ENCODE measurements at regions of chr6 and their contacts with region 1.

Region 1: GRCh38 chr6:151475653-151476523 is 17.9 kb upstream of the CCDC170 start:
- DNase-seq: no peak
- H3K4me3 ChIP-seq: no peak overlapping the region
- H3K27ac ChIP-seq: no peak overlapping the region
- H3K4me1 ChIP-seq: peaks cover 0 to 7% (median 2%) of the 10 kb centered on the region in 4 donors
- H3K27me3 ChIP-seq: no peaks in the 10 kb centered on the region
- CTCF ChIP-seq: peak in 3 of 4 experiments; percentile 16 to 74 (median 56)
- EP300 ChIP-seq: no peak
- POLR2A ChIP-seq: no peak

Region 2: DNA sequence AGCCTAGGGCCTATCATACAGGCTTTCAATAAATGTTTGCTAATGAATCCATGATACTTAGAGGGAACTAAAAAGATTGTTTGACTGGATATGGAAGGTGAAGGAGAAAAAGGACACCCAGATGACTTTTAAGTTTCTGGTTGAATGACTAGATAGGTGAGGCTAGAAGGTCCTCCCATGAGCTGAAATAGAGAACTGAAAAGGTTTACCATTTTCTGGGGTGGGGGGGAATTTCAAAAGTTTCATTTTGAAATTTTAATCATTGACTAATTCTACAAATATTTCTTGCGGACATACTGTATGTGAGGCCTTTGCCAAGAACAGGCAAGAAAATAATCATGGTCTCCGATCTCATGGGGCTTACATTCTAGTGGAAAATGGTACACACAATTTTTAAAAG is 66.6 kb before region 1 on chr6:
- intact Hi-C with region 1: loop called (anchors 10 kb)
- DNase-seq: no peak
- H3K4me3 ChIP-seq: no peak overlapping the region
- H3K27ac ChIP-seq: no peak overlapping the region
- H3K4me1 ChIP-seq: peaks cover 0 to 5% (median 0%) of the 10 kb centered on the region in 4 donors
- H3K27me3 ChIP-seq: no peaks in the 10 kb centered on the region
- CTCF ChIP-seq: no peak
- EP300 ChIP-seq: no peak
- POLR2A ChIP-seq: no peak

Region 3: DNA sequence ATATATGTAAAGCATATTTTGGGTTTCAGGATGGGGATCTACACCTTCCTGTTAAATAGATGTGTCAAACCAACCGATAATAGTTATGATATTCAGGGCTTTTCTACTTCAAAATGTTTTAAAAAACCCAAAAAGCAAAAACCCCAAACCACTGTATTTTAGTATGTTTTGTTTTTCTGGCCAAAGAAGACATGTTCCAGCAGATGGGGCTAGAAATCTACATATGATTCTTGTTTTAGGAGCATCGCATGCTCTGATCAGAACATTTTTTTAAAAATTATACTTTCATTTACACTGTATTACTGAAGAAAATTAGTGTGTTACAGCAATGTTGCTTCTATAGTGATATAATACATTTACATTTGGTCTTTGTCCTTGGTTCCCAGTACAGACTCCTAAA is 35.0 kb before region 1 on chr6:
- intact Hi-C with region 1: loop called (anchors 5 kb)
- DNase-seq: no peak
- H3K4me3 ChIP-seq: no peak overlapping the region
- H3K27ac ChIP-seq: peak overlapping the region in 1 of 4 donors; percentile 6
- H3K4me1 ChIP-seq: peaks cover 0 to 32% (median 15%) of the 10 kb centered on the region in 4 donors
- H3K27me3 ChIP-seq: no peaks in the 10 kb centered on the region
- CTCF ChIP-seq: peak in 1 of 4 experiments; percentile 25
- EP300 ChIP-seq: no peak
- POLR2A ChIP-seq: no peak

Measured in sigmoid colon (tissue), 7 donors.